Aorta (tissue), 5 donors: ENCODE measurements at regions of chr14 and their contacts with region 1.

Region 1: DNA sequence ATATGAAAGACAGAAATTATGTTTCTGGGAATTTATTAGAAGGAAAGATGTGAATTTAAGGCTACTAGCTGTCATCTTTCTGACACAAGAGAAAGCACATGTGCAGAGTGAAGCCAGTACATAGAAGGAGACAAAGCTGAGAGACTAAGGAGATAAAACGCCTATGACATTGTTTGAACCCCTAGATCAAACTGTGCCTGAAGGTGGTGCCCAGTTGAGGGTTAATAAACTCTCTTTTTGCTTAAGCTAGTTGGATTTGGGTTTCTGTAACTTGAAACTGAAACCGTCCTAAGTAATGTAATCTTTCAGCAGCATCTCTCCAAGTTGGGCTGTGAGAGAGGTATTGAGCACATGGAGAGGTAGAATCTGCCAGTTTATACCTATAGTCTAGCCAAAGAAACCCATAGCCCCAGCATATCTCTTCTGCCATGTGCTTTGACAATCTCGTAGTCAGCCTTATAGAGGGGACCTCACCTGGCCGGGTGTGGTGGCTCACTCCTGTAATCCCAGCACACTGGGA is 84.2 kb downstream of the LRRC74A start:
- DNase-seq: no peak
- ATAC-seq: no peak
- H3K4me3 ChIP-seq: no peak overlapping the region
- H3K27ac ChIP-seq: no peak overlapping the region
- H3K4me1 ChIP-seq: no peaks in the 10 kb centered on the region
- H3K27me3 ChIP-seq: no peaks in the 10 kb centered on the region

Region 2: DNA sequence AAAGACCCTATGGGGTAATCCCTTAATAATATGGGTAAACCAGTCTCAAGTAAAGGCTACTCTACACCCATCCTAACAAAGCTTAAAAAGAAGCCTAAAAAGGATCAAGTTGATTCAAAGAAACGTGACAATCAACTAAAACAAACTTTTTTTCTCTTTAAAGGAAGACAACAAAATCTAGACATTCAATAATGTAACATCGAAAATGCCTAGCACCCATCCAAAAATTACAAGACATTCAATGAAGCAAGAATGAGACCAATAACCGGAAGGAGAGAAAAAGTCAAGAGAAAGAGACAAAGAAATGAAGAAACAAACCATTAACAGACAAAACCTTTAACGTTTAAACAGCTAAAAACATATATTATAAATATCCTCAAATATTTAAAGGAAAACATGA is 293.0 kb before region 1 on chr14:
- intact Hi-C with region 1: no loop called
- DNase-seq: no peak
- ATAC-seq: no peak
- H3K4me3 ChIP-seq: no peak overlapping the region
- H3K27ac ChIP-seq: no peak overlapping the region
- H3K4me1 ChIP-seq: no peaks in the 10 kb centered on the region
- H3K27me3 ChIP-seq: peaks cover 0 to 3% of the 10 kb centered on the region in 2 donors

Region 3: GRCh38 chr14:76855066-76855465 is 55.4 kb before region 1 on chr14:
- intact Hi-C with region 1: no loop called
- DNase-seq: no peak
- ATAC-seq: no peak
- H3K4me3 ChIP-seq: no peak overlapping the region
- H3K27ac ChIP-seq: no peak overlapping the region
- H3K4me1 ChIP-seq: no peaks in the 10 kb centered on the region
- H3K27me3 ChIP-seq: no peaks in the 10 kb centered on the region

Region 4: GRCh38 chr14:77067632-77068514 is 157.4 kb after region 1 on chr14:
- intact Hi-C with region 1: loop called (anchors 1 to 5 kb)
- DNase-seq: peak; percentile 78 to 90
- ATAC-seq: peak; percentile 80
- H3K4me3 ChIP-seq: no peak overlapping the region
- H3K27ac ChIP-seq: no peak overlapping the region
- H3K4me1 ChIP-seq: no peaks in the 10 kb centered on the region
- H3K27me3 ChIP-seq: no peaks in the 10 kb centered on the region

Region 5: GRCh38 chr14:77124345-77125280 is 214.2 kb after region 1 on chr14:
- intact Hi-C with region 1: no loop called
- DNase-seq: peak; percentile 71 to 85
- ATAC-seq: peak; percentile 87
- H3K4me3 ChIP-seq: peak overlapping the region; percentile 12 to 49
- H3K27ac ChIP-seq: no peak overlapping the region
- H3K4me1 ChIP-seq: no peaks in the 10 kb centered on the region
- H3K27me3 ChIP-seq: no peaks in the 10 kb centered on the region